GM10248 (cell line): ENCODE measurements at regions of chr1 and their contacts with region 1.

Region 1: GRCh38 chr1:182426442-182427430 is 23.2 kb upstream of the RGSL1 start:
- DNase-seq: peak; percentile 62
- CTCF ChIP-seq: no peak

Region 2: DNA sequence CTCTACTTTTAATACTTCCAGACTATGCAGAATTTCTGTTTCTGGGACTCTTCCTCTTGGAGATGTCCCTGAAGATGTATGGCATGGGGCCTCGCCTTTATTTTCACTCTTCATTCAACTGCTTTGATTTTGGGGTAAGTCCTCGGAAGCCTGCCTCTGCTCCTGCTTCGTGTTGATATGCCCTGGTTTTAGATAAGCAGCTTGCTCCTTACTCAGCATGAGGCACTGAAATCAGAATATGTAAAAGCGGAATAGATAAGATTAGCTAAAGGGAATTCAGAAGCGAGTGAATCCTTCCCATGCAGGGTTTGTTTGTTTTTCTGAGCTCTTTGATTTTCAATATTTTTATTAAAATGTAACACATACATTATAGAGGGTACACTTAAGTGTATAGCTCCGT is 708.7 kb before region 1 on chr1:
- CTCF ChIA-PET with region 1: no interaction called
- POLR2A ChIA-PET with region 1: no interaction called
- DNase-seq: no peak
- CTCF ChIP-seq: no peak

Region 3: GRCh38 chr1:182357913-182358312 is 68.8 kb before region 1 on chr1:
- CTCF ChIA-PET with region 1: no interaction called
- POLR2A ChIA-PET with region 1: no interaction called
- DNase-seq: no peak
- CTCF ChIP-seq: no peak

Region 4: DNA sequence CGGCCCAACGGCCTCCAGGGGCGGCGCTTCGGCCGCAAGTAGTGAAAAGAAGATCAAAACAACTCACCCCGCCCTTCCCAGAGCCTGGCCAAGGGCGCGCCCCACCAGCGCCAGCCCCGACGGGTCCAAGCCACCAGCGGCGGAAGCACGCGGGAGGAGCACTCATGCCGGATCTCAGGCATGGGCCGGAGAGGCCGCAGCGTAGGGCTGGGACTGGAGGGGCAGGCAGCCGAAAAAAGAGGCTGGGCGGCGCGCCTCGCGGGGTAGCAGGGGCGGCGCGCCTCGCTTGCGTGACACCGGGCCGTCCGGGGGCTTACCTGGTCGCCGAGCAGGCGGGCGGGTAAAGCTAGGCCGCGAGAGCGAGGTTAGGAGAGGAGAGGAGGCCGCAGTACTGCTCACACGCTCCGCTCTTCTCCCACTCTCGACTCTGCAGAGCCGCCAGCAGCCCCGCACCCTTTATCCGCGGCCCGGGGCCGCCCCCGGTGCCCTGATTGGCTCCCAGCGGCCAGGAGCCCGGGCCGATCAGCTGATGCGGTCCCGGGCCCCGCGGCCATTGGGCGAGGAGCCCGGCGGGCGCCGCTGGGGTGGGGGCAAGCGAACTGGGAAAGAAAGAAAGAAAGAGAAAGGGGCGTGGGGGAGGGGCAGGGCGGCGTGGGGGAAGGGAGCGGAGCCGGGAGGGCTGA is 35.2 kb before region 1 on chr1 and contains the start of gene GLUL:
- CTCF ChIA-PET with region 1: interaction called, 11 read pairs
- POLR2A ChIA-PET with region 1: interaction called, 10 read pairs
- DNase-seq: peak; percentile 91
- CTCF ChIP-seq: no peak

Region 5: GRCh38 chr1:182410620-182411273 is 16.0 kb before region 1 on chr1:
- CTCF ChIA-PET with region 1: interaction called, 17 read pairs
- POLR2A ChIA-PET with region 1: no interaction called
- DNase-seq: no peak
- CTCF ChIP-seq: no peak

Region 6: DNA sequence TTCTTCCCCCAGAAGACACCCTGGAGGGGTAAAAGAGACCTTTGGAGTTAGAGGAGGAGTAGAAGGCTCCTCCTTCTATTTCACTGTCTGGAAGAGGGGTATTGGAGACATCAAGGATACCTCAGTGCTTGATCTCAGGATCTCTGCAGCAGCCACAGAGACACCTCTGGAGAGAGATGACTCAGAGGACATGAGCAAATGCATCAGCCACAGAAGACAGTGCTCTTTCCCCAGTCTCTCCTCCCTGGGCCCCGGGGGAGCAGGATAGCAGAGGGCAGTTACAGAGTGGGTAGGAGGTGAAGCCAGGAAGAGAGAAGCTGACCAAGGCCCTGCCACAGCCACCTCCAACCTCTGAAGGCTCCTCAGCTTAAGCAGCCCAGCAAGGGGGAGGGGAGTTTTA is 10.9 kb before region 1 on chr1:
- CTCF ChIA-PET with region 1: interaction called, 14 read pairs
- POLR2A ChIA-PET with region 1: no interaction called
- DNase-seq: no peak
- CTCF ChIP-seq: no peak